ENCODE measurements at regions of chr9 and their contacts with region 1.

Region 1: GRCh38 chr9:93133681-93134014 is 403 bp downstream of the NINJ1 start:
- DNase-seq: peak; percentile 78 to 80
- H3K4me3 ChIP-seq: peak overlapping the region; percentile 55
- H3K4me3 Mint-ChIP-seq: peak overlapping the region; percentile 79
- H3K27ac Mint-ChIP-seq: peak overlapping the region; percentile 80
- H3K4me1 ChIP-seq: peaks cover 10% of the 10 kb centered on the region; the same call in 1 of the 2 replicates
- H3K4me1 Mint-ChIP-seq: peaks cover 6% of the 10 kb centered on the region
- H3K27me3 ChIP-seq: no peaks in the 10 kb centered on the region
- H3K27me3 Mint-ChIP-seq: no peaks in the 10 kb centered on the region
- CTCF ChIP-seq: no peak

Region 2: GRCh38 chr9:92877531-92878430 is 255.9 kb before region 1 on chr9 and contains the start of gene ZNF484:
- CTCF ChIA-PET with region 1: no interaction called
- POLR2A ChIA-PET with region 1: no interaction called
- intact Hi-C with region 1: loop called (anchors 1 kb)
- DNase-seq: peak; percentile 87 to 94
- H3K4me3 ChIP-seq: peak within 1 kb of the TSS; percentile 65
- H3K4me3 Mint-ChIP-seq: peak within 1 kb of the TSS; percentile 93
- H3K27ac Mint-ChIP-seq: peak within 1 kb of the TSS; percentile 93
- H3K4me1 ChIP-seq: no peaks in the 10 kb centered on the region
- H3K4me1 Mint-ChIP-seq: no peaks in the 10 kb centered on the region
- H3K27me3 ChIP-seq: no peaks in the 10 kb centered on the region
- H3K27me3 Mint-ChIP-seq: no peaks in the 10 kb centered on the region
- CTCF ChIP-seq: no peak
- total RNA-seq, gene ZNF484: 3.3 and 3.6 TPM in 2 replicates

Region 3: DNA sequence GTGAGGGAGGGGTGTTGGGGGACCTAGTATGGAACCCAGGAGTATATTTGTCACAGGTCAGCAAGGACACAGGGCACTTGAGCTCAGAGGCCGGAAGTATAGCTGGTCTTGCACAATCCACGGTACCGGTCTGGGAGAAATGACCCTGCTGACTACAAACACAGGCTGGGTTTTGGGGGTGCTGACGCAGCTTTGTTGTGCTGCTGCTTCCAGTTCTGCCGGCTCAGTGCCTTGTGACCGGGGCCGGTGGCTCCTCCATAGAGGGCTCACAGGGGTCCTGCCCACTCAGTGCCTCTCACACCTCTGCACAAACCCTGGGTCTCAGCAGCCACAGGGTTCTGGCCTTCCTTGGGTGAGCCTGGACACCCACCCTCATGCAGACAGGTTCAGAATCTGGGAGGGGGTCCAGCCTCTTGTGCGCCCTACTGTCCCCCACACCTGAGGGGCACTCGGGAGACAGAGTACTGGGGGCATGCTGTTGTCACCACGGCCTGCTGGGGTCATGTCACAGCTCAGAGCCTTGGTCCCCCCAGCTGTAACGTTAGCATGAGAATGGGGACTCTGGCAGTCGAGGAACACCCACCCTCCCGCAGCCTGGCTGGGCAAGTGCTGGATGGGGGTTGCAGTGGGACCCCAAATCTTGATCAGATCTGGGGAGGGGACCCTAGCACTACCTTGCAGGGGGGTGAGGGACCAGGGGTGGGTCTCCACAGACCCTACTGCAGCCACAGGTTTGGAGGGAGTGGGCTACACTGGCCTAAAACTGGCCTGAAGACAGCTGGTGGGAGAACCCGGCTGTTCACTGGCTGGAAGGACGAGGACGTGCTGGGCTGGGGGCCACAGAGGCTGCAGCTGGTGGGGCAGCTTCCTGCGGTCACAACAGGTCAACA is 17.3 kb before region 1 on chr9:
- CTCF ChIA-PET with region 1: no interaction called
- POLR2A ChIA-PET with region 1: no interaction called
- intact Hi-C with region 1: no loop called
- DNase-seq: peak in 1 of 2 experiments; percentile 9
- H3K4me3 ChIP-seq: no peak overlapping the region
- H3K4me3 Mint-ChIP-seq: no peak overlapping the region
- H3K27ac Mint-ChIP-seq: no peak overlapping the region
- H3K4me1 ChIP-seq: no peaks in the 10 kb centered on the region
- H3K4me1 Mint-ChIP-seq: no peaks in the 10 kb centered on the region
- H3K27me3 ChIP-seq: no peaks in the 10 kb centered on the region
- H3K27me3 Mint-ChIP-seq: no peaks in the 10 kb centered on the region
- CTCF ChIP-seq: no peak

Region 4: GRCh38 chr9:93235300-93235960 is 101.8 kb after region 1 on chr9:
- CTCF ChIA-PET with region 1: no interaction called
- POLR2A ChIA-PET with region 1: no interaction called
- intact Hi-C with region 1: no loop called
- DNase-seq: no peak
- H3K4me3 ChIP-seq: no peak overlapping the region
- H3K4me3 Mint-ChIP-seq: no peak overlapping the region
- H3K27ac Mint-ChIP-seq: no peak overlapping the region
- H3K4me1 ChIP-seq: no peaks in the 10 kb centered on the region
- H3K4me1 Mint-ChIP-seq: no peaks in the 10 kb centered on the region
- H3K27me3 ChIP-seq: no peaks in the 10 kb centered on the region
- H3K27me3 Mint-ChIP-seq: no peaks in the 10 kb centered on the region
- CTCF ChIP-seq: no peak

Region 5: DNA sequence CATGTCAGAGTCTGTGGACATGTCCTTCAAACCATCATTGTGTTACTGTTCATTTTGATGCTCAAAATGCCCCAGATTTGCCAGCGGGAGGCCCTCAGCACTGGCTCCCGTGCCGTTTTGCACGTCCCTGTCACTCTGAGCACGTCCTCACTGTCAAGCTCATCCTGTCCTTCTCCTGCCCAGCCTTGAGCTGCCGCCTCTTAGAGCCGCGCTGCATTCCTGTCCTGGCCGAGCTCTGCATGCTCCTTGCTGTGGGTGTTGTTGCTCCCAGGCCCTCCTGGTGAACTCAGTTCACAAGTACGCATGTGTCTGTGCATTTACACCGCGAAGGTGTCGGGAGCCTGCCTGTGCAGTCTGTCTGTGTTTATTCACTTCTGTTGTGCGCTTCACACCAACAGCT is 112.5 kb after region 1 on chr9:
- CTCF ChIA-PET with region 1: no interaction called
- POLR2A ChIA-PET with region 1: no interaction called
- intact Hi-C with region 1: no loop called
- DNase-seq: no peak
- H3K4me3 ChIP-seq: no peak overlapping the region
- H3K4me3 Mint-ChIP-seq: no peak overlapping the region
- H3K27ac Mint-ChIP-seq: no peak overlapping the region
- H3K4me1 ChIP-seq: no peaks in the 10 kb centered on the region
- H3K4me1 Mint-ChIP-seq: no peaks in the 10 kb centered on the region
- H3K27me3 ChIP-seq: no peaks in the 10 kb centered on the region
- H3K27me3 Mint-ChIP-seq: no peaks in the 10 kb centered on the region
- CTCF ChIP-seq: no peak